ENCODE measurements at regions of chr6 and their contacts with region 1.

Region 1: DNA sequence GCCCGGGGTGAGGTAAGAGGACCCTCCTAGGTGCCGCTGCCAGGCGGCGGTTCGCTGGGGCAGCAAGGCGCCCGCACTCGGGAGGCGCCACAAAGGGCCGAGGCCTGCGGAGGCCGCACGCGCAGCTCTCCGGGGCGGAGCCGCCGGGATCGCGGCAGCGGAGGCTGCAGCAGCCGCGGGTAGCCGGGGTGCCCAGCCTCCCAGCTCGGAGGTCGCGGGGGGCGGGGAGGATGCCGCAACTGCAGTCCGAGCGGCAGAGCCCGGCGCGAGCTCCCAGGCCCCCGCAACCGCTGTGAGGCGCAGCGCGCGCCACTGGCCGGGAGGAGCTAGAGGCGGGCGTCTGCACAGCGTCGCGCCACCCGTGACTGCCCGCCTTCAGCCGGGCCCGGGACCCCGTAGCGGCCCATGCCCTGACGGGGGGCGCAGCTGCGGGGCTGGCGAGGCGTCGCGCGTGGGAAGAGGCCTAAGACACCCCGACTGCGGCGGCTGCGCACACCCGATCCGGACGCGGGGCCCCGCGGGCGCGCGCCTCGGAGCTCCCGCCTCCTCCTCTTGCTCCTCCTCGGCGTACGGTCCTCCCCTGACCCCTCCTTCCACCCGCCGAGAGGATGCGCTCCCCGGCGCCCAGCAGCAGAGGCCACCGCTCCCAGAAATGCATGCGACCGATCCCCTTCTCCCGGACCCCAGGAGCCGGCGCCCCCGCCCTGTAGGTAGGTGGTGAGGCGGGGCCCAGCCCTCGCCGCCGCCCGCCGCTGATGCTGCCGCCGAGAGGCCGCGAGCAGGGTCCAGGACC is at the start of gene NCOA7:
- DNase-seq: peak; percentile 50 to 72
- ATAC-seq: peak; percentile 85 to 87
- H3K4me3 ChIP-seq: peak within 1 kb of the TSS; percentile 81
- H3K27ac ChIP-seq: peak within 1 kb of the TSS; percentile 91 to 97
- H3K4me1 ChIP-seq: peaks cover 53% of the 10 kb centered on the region
- CTCF ChIP-seq: no peak
- EP300 ChIP-seq: no peak
- POLR2A ChIP-seq: peak; percentile 55
- RAD21 ChIP-seq: no peak
- polyA plus RNA-seq, gene NCOA7: 154 and 195 TPM in 2 replicates

Region 2: GRCh38 chr6:125123788-125124777 is 666.5 kb before region 1 on chr6:
- CTCF ChIA-PET with region 1: no interaction called
- POLR2A ChIA-PET with region 1: no interaction called
- DNase-seq: peak in 1 of 2 experiments; percentile 77
- ATAC-seq: peak; percentile 66 to 95; a peak in 5 of 6 replicates
- H3K4me3 ChIP-seq: no peak overlapping the region
- H3K27ac ChIP-seq: peak overlapping the region; percentile 75 to 84
- H3K4me1 ChIP-seq: peaks cover 16% of the 10 kb centered on the region
- CTCF ChIP-seq: no peak
- EP300 ChIP-seq: no peak
- POLR2A ChIP-seq: no peak
- RAD21 ChIP-seq: no peak

Region 3: GRCh38 chr6:125779924-125780539 is 10.5 kb before region 1 on chr6:
- CTCF ChIA-PET with region 1: interaction called, 22 read pairs
- POLR2A ChIA-PET with region 1: interaction called, 47 read pairs
- DNase-seq: peak; percentile 75 to 91
- ATAC-seq: peak; percentile 85 to 89
- H3K4me3 ChIP-seq: peak overlapping the region; percentile 53
- H3K27ac ChIP-seq: peak overlapping the region; percentile 88 to 91
- H3K4me1 ChIP-seq: peaks cover 23% of the 10 kb centered on the region
- CTCF ChIP-seq: no peak
- EP300 ChIP-seq: no peak
- POLR2A ChIP-seq: no peak
- RAD21 ChIP-seq: no peak

Region 4: GRCh38 chr6:125802378-125802777 is 11.8 kb after region 1 on chr6:
- CTCF ChIA-PET with region 1: interaction called, 12 read pairs
- POLR2A ChIA-PET with region 1: no interaction called
- DNase-seq: no peak
- ATAC-seq: peak in 1 of 2 experiments; percentile 46; a peak in 2 of 6 replicates
- H3K4me3 ChIP-seq: no peak overlapping the region
- H3K27ac ChIP-seq: no peak overlapping the region
- H3K4me1 ChIP-seq: peaks cover 24% of the 10 kb centered on the region; the same call in 1 of the 3 replicates
- CTCF ChIP-seq: no peak
- EP300 ChIP-seq: no peak
- POLR2A ChIP-seq: no peak
- RAD21 ChIP-seq: no peak

Region 5: GRCh38 chr6:125829433-125829832 is 38.9 kb after region 1 on chr6:
- CTCF ChIA-PET with region 1: no interaction called
- POLR2A ChIA-PET with region 1: no interaction called
- DNase-seq: no peak
- ATAC-seq: no peak
- H3K4me3 ChIP-seq: no peak overlapping the region
- H3K27ac ChIP-seq: no peak overlapping the region
- H3K4me1 ChIP-seq: peaks cover 12% of the 10 kb centered on the region
- CTCF ChIP-seq: no peak
- EP300 ChIP-seq: no peak
- POLR2A ChIP-seq: no peak
- RAD21 ChIP-seq: no peak

Region 6: DNA sequence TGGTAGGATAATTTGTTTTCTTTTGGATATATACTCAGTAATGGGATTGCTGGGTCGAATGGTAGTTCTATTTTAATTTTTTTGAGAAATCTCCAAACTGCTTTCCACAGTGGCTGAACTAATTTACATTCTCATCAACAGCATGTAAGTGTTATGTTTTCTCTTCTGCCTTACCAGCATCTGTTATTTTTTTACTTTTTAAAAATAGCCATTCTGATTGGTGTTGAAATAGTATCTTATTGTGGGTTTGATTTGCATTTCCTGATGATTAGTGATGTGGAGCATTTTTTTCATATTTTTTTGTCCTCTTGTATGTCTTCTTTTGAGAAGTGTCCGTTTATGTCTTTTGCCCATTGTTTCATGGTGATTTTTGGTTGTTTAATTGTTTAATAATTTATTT is 177.9 kb after region 1 on chr6:
- CTCF ChIA-PET with region 1: interaction called, 19 read pairs
- POLR2A ChIA-PET with region 1: no interaction called
- DNase-seq: no peak
- ATAC-seq: no peak
- H3K4me3 ChIP-seq: no peak overlapping the region
- H3K27ac ChIP-seq: no peak overlapping the region
- H3K4me1 ChIP-seq: peaks cover 6% of the 10 kb centered on the region; the same call in 2 of the 3 replicates
- CTCF ChIP-seq: no peak
- EP300 ChIP-seq: no peak
- POLR2A ChIP-seq: no peak
- RAD21 ChIP-seq: no peak

Region 7: DNA sequence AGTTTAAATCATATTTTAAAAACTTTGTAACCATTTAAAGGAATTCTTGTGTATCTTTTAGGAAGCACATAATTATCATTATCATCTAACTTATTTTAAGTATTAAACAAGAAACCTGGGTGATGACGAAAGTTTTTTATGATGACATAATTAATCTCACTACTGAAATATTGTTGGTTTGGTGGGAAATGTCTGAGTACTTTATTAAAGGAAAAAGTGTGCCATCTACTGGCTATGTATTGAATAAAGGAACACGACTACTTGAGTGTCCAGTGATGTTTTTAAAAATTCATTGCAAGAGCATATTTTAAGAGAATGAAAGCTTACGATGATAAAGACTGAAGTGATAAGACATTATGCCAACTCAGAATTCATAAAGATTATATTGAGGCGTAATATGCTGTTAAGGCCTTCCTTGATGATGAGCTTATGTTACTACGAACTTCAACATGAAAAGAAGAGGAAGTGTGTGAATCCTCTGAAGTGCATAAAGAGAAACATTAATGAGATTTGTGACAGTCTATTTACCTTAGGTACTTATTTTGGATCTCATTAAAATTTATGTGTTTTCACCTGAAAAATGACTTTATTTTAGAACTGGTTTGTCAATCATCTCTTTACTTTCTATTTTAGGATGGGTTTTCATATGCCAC is 183.8 kb after region 1 on chr6:
- CTCF ChIA-PET with region 1: interaction called, 19 read pairs
- POLR2A ChIA-PET with region 1: interaction called, 3 read pairs
- DNase-seq: peak; percentile 19 to 52
- ATAC-seq: peak; percentile 77 to 81
- H3K4me3 ChIP-seq: no peak overlapping the region
- H3K27ac ChIP-seq: peak overlapping the region; percentile 41 to 73; a peak in 3 of 6 replicates
- H3K4me1 ChIP-seq: peaks cover 6% of the 10 kb centered on the region; the same call in 1 of the 3 replicates
- CTCF ChIP-seq: peak; percentile 72
- EP300 ChIP-seq: no peak
- POLR2A ChIP-seq: no peak
- RAD21 ChIP-seq: peak; percentile 72 to 73

Region 8: GRCh38 chr6:125986300-125987025 is 195.9 kb after region 1 on chr6 and contains the start of gene TRMT11:
- CTCF ChIA-PET with region 1: interaction called, 4 read pairs
- POLR2A ChIA-PET with region 1: interaction called, 13 read pairs
- DNase-seq: peak; percentile 85 to 89
- ATAC-seq: peak; percentile 97 to 99
- H3K4me3 ChIP-seq: peak within 1 kb of the TSS; percentile 68
- H3K27ac ChIP-seq: peak within 1 kb of the TSS; percentile 92 to 95
- H3K4me1 ChIP-seq: peaks cover 46% of the 10 kb centered on the region
- CTCF ChIP-seq: no peak
- EP300 ChIP-seq: no peak
- POLR2A ChIP-seq: peak; percentile 90
- RAD21 ChIP-seq: no peak
- polyA plus RNA-seq, gene TRMT11: 33.2 and 44.1 TPM in 2 replicates